ENCODE measurements at regions of chr1 and their contacts with region 1.

Region 1: GRCh38 chr1:39196244-39197215 is 8.0 kb upstream of the MACF1 start:
- DNase-seq: peak; percentile 81
- H3K4me3 Mint-ChIP-seq: peak overlapping the region; percentile 67
- H3K27ac Mint-ChIP-seq: peak overlapping the region; percentile 97
- H3K4me1 Mint-ChIP-seq: peaks cover 76% of the 10 kb centered on the region
- H3K27me3 Mint-ChIP-seq: no peaks in the 10 kb centered on the region

Region 2: DNA sequence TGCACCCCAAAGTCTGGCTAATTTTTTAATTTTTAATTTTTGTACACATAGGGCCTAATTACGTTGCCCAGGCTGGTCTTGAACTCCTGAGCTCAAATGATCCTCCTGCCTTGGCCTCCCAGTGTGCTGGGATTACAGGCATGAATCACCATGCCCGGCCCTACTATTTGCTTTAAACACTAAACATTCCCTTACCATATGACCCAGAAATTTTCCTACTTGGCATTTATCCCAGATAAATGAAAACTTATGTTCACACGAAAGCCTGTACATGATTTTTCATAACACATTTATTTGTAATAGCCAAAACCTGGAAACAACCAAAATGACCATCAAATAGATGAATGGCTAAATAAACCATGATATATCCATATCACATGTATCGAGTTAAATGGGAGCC is 134.6 kb before region 1 on chr1:
- CTCF ChIA-PET with region 1: no interaction called
- POLR2A ChIA-PET with region 1: no interaction called
- DNase-seq: no peak
- H3K4me3 Mint-ChIP-seq: no peak overlapping the region
- H3K27ac Mint-ChIP-seq: no peak overlapping the region
- H3K4me1 Mint-ChIP-seq: no peaks in the 10 kb centered on the region
- H3K27me3 Mint-ChIP-seq: no peaks in the 10 kb centered on the region

Region 3: DNA sequence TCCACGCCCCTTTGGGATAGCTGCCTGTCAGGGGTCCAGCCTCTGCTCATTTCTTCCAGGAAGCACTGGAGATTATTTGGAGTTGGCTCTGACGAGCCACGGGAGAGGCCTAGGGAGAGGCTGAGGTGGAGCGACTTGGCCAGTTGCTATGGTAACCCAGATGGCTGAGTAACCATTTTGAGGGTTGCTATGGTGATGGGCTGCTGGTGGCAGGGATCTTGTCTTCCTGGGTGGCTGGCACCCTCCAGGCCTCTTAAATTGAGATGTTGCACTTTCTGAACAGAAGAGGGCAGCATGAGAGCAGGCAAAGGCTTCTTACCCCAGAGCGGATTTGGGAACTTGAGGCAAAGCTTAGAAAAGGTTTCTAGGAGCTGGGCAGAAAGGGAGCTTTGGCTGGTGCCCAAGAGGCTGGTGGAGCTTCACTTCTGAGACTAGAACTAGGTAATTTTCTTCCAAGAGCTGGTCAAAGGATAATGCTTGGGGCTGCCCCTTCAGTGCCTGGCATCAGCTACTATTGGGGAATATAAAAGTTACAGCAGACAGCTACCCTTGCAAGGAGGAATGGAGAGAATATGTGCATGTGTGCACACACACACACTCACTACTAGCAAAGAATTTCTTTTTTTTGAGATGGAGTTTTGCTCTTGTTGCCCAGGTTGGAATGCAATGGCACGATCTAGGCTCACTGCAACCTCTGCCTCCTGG is 97.8 kb before region 1 on chr1:
- CTCF ChIA-PET with region 1: interaction called, 11 read pairs
- POLR2A ChIA-PET with region 1: no interaction called
- DNase-seq: peak; percentile 76
- H3K4me3 Mint-ChIP-seq: no peak overlapping the region
- H3K27ac Mint-ChIP-seq: no peak overlapping the region
- H3K4me1 Mint-ChIP-seq: peaks cover 22% of the 10 kb centered on the region
- H3K27me3 Mint-ChIP-seq: no peaks in the 10 kb centered on the region

Region 4: GRCh38 chr1:39127513-39127912 is 69.0 kb before region 1 on chr1:
- CTCF ChIA-PET with region 1: no interaction called
- POLR2A ChIA-PET with region 1: no interaction called
- DNase-seq: no peak
- H3K4me3 Mint-ChIP-seq: no peak overlapping the region
- H3K27ac Mint-ChIP-seq: no peak overlapping the region
- H3K4me1 Mint-ChIP-seq: peaks cover 5% of the 10 kb centered on the region
- H3K27me3 Mint-ChIP-seq: no peaks in the 10 kb centered on the region

Region 5: GRCh38 chr1:39167632-39168209 is 28.8 kb before region 1 on chr1:
- CTCF ChIA-PET with region 1: interaction called, 13 read pairs
- POLR2A ChIA-PET with region 1: no interaction called
- DNase-seq: no peak
- H3K4me3 Mint-ChIP-seq: no peak overlapping the region
- H3K27ac Mint-ChIP-seq: no peak overlapping the region
- H3K4me1 Mint-ChIP-seq: no peaks in the 10 kb centered on the region
- H3K27me3 Mint-ChIP-seq: no peaks in the 10 kb centered on the region

Region 6: GRCh38 chr1:39183503-39184353 is 12.8 kb before region 1 on chr1:
- CTCF ChIA-PET with region 1: interaction called, 33 read pairs
- POLR2A ChIA-PET with region 1: no interaction called
- DNase-seq: peak; percentile 89
- H3K4me3 Mint-ChIP-seq: no peak overlapping the region
- H3K27ac Mint-ChIP-seq: peak overlapping the region; percentile 82
- H3K4me1 Mint-ChIP-seq: peaks cover 47% of the 10 kb centered on the region
- H3K27me3 Mint-ChIP-seq: no peaks in the 10 kb centered on the region

Region 7: DNA sequence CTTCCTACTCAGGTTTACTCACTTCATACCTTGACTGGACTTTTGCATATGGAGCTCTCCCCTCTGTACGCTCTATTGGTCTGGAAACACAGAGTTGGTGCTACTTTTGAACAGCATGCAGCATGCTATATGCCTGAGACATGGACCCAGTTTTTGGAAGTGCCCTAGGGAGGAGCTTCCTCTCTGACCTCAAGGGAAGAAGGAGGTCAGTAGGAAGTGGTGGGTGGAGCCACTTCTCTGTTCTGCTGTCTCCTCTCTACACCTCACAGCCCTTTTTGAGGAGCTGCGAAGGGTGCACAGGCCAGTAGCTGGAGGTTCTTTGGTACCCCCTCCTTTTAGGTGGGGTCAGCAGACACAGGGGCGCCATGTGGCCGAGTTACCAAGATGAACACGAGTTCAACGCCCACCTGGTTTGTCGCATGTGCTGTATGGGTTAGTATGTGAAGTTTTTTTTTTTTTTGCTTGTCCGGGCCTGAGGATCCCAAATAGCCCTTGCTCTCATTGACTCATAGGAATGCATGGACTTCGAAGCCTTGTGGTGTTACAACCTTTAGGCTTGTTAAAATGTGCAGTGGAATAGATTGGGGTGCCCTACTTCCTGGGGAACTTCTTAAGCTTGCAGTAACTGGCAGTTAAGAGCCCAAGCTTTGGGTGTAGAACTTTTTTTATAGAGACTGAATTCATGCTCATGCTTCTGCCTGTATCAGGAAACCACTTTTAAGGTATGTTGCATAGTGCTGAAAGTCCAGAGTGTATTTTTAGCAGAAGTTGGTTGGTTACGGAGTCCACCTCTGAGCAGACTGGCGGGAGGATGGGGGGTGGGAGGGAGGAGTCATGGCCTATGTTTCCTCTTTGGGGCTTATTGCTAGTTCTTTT is 18.7 kb after region 1 on chr1:
- CTCF ChIA-PET with region 1: interaction called, 104 read pairs
- POLR2A ChIA-PET with region 1: interaction called, 4 read pairs
- DNase-seq: peak; percentile 51
- H3K4me3 Mint-ChIP-seq: peak overlapping the region; percentile 92
- H3K27ac Mint-ChIP-seq: peak overlapping the region; percentile 92
- H3K4me1 Mint-ChIP-seq: peaks cover 57% of the 10 kb centered on the region
- H3K27me3 Mint-ChIP-seq: no peaks in the 10 kb centered on the region

Region 8: GRCh38 chr1:39220891-39221870 is 24.7 kb after region 1 on chr1:
- CTCF ChIA-PET with region 1: interaction called, 56 read pairs
- POLR2A ChIA-PET with region 1: no interaction called
- DNase-seq: no peak
- H3K4me3 Mint-ChIP-seq: no peak overlapping the region
- H3K27ac Mint-ChIP-seq: no peak overlapping the region
- H3K4me1 Mint-ChIP-seq: peaks cover 61% of the 10 kb centered on the region
- H3K27me3 Mint-ChIP-seq: no peaks in the 10 kb centered on the region

Region 9: DNA sequence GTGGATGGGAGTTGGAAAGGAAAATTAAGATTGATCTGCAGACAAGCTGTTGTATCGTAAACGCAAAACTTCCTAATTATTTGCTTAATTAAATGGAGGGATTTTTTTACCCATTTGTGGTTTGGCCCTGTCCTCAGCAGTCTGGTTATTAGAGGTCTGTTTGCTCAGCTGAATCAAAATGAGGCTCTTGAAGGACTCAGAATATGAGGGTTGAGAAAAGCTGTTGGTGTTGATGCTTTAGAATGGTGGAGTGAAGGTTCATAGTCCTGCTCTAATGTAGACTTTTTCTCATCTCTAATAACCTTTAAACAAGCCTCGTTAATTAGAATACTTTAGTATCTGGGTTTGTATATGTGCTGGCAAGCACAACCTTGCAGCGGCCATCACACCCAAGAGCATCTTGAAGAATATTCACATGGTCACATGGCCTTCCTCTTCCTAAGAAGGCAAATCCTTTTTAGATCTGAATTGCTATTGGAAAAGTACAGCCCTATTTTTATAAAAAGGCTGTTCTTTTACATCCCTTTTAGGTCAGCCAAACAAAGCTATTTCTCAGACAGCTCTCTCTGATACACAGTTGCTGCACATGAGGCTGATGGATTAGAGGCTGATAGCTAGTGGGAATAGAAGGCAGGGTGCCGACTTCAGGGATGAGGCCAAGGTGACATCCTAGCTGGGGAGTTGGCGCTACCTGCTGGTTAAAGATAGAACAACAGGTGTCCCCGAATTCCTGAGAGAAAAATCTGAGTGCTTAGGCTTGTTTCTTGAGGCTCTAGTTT is 61.8 kb after region 1 on chr1:
- CTCF ChIA-PET with region 1: interaction called, 44 read pairs
- POLR2A ChIA-PET with region 1: no interaction called
- DNase-seq: peak; percentile 65
- H3K4me3 Mint-ChIP-seq: no peak overlapping the region
- H3K27ac Mint-ChIP-seq: no peak overlapping the region
- H3K4me1 Mint-ChIP-seq: peaks cover 38% of the 10 kb centered on the region
- H3K27me3 Mint-ChIP-seq: no peaks in the 10 kb centered on the region

Measured in activated CD4-positive, alpha-beta T cell treated with anti-CD3 and anti-CD28 coated beads, Interleukin-2, amount 10 ng/mL, durations not matched to agents 7 days and 5 days (primary cell).